Common myeloid progenitor, CD34-positive (primary cell): ENCODE measurements at regions of chr15 and their contacts with region 1.

Region 1: DNA sequence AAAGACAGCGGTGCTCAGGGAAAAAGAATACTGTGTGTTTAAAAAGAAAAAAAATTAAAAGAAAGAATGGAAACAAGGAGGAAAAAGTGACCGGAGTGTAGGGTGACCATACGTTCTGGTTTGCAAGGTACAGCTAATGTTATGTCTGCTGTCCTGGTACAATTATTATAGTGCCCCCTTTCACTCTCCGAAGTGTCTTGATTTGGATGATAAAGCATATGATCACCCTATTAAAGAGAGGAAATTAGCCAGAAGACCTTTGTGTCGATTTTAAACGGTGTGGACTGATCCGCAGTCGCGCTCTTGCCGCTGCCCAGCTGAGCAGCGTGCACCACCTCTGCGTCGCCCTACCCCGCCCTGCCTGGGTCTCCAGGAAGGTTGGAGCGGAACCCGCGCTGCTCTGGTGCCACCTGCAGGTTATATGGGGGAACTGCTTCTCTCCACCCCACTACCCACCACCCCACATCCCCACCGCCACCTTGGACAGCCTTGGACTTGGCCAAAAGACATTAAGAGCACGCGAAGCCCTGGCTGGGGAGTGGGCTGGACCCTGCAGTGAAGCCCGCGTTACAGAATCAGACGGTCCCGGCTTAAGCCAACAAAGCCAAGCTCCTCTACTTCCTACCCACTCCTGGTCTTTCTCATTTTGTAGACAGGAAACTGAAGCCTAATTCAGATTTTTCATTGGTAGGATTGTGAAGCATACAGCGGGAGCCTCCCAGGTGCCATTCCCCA is 41.2 kb upstream of the UBE2Q2 start:
- DNase-seq: peak; percentile 65 to 82 (median 80)
- H3K4me3 ChIP-seq: peak overlapping the region in 4 of 7 experiments; percentile 11 to 65 (median 31)
- H3K27ac ChIP-seq: no peak overlapping the region
- H3K4me1 ChIP-seq: peaks cover 2 to 7% (median 6%) of the 10 kb centered on the region in 4 experiments
- H3K27me3 ChIP-seq: peaks cover 2 to 15% (median 8%) of the 10 kb centered on the region in 5 experiments

Region 2: GRCh38 chr15:75723847-75724660 is 78.0 kb before region 1 on chr15:
- CTCF ChIA-PET with region 1: interaction called, 52 read pairs
- POLR2A ChIA-PET with region 1: no interaction called
- DNase-seq: peak; percentile 82 to 89 (median 89)
- H3K4me3 ChIP-seq: peak overlapping the region in 1 of 7 experiments; percentile 7
- H3K27ac ChIP-seq: no peak overlapping the region
- H3K4me1 ChIP-seq: peaks cover 0 to 18% (median 9%) of the 10 kb centered on the region in 4 experiments
- H3K27me3 ChIP-seq: peaks cover 0 to 9% (median 0%) of the 10 kb centered on the region in 5 experiments

Region 3: GRCh38 chr15:75732809-75733451 is 69.1 kb before region 1 on chr15:
- CTCF ChIA-PET with region 1: interaction called, 52 read pairs
- POLR2A ChIA-PET with region 1: no interaction called
- DNase-seq: peak; percentile 43 to 63 (median 49)
- H3K4me3 ChIP-seq: peak overlapping the region in 2 of 7 experiments; percentile 10 to 49
- H3K27ac ChIP-seq: no peak overlapping the region
- H3K4me1 ChIP-seq: peaks cover 0 to 21% (median 18%) of the 10 kb centered on the region in 4 experiments
- H3K27me3 ChIP-seq: peaks cover 0 to 5% (median 0%) of the 10 kb centered on the region in 5 experiments

Region 4: GRCh38 chr15:75815811-75816719 is 14.0 kb after region 1 on chr15:
- CTCF ChIA-PET with region 1: interaction called, 16 read pairs
- POLR2A ChIA-PET with region 1: no interaction called
- DNase-seq: no peak
- H3K4me3 ChIP-seq: no peak overlapping the region
- H3K27ac ChIP-seq: no peak overlapping the region
- H3K4me1 ChIP-seq: no peaks in the 10 kb centered on the region
- H3K27me3 ChIP-seq: no peaks in the 10 kb centered on the region

Region 5: GRCh38 chr15:75827691-75828090 is 25.7 kb after region 1 on chr15:
- CTCF ChIA-PET with region 1: no interaction called
- POLR2A ChIA-PET with region 1: no interaction called
- DNase-seq: no peak
- H3K4me3 ChIP-seq: no peak overlapping the region
- H3K27ac ChIP-seq: no peak overlapping the region
- H3K4me1 ChIP-seq: peaks cover 0 to 11% (median 0%) of the 10 kb centered on the region in 4 experiments
- H3K27me3 ChIP-seq: peaks cover 0 to 4% (median 0%) of the 10 kb centered on the region in 5 experiments

Region 6: GRCh38 chr15:75857886-75858285 is 55.9 kb after region 1 on chr15:
- CTCF ChIA-PET with region 1: no interaction called
- POLR2A ChIA-PET with region 1: no interaction called
- DNase-seq: no peak
- H3K4me3 ChIP-seq: no peak overlapping the region
- H3K27ac ChIP-seq: no peak overlapping the region
- H3K4me1 ChIP-seq: peaks cover 0 to 4% (median 1%) of the 10 kb centered on the region in 4 experiments
- H3K27me3 ChIP-seq: no peaks in the 10 kb centered on the region

Region 7: GRCh38 chr15:75921729-75922703 is 120.0 kb after region 1 on chr15:
- CTCF ChIA-PET with region 1: interaction called, 29 read pairs
- POLR2A ChIA-PET with region 1: no interaction called
- DNase-seq: peak; percentile 76 to 84 (median 83)
- H3K4me3 ChIP-seq: no peak overlapping the region
- H3K27ac ChIP-seq: no peak overlapping the region
- H3K4me1 ChIP-seq: no peaks in the 10 kb centered on the region
- H3K27me3 ChIP-seq: no peaks in the 10 kb centered on the region